Endothelial cell of umbilical vein (primary cell): ENCODE measurements at regions of chr1 and their contacts with region 1.

Region 1: DNA sequence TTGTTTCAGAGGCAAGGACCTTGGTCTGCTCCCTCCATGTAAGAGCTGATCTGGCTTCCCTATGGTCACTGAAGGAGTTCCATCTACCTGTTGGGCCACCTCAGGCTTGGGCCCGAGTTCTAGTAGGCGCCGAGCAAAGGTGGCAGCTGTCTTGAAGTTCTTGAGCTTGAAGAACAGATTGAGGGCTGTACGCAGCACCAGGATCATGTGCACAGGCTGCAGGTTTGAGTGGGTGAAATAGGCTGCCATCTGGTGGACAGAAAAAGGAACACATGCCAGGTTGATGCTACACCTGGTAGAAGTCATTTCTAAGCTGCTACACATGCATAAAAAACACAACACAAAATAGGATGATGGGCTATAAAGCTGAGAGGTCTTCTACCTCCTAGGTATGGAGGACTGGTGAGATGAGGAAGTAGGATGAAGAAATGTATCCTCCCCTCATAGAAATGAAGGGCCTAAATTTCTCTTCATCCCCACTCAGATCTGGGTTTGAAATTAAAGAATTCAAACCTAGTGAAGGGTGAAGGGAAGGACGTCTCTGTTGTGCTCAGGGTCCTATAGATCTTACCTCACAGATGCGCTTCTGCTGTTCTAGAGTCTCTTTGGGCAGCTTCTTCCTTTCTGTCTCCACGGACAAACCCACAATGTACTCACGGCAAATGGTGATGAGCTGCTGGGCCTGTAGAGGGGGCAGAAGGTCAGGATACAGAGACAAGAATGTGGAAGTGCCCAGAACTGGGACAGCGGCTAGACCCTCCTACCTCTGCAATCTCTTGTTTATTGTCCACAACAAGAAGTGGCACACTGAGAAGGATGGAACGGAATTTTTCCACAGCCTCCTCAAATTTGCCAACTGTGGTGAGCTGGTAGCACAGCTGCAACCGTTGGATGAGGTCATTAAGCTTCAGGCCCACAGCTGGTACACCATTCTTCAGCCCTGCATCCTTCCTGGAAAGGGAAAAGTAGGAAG is 6.6 kb upstream of the PEX19 start:
- DNase-seq: peak; percentile 76
- H3K4me3 ChIP-seq: no peak overlapping the region
- H3K27ac ChIP-seq: no peak overlapping the region
- H3K4me1 ChIP-seq: no peaks in the 10 kb centered on the region
- H3K27me3 ChIP-seq: no peaks in the 10 kb centered on the region
- CTCF ChIP-seq: peak; percentile 66 to 72
- POLR2A ChIP-seq: no peak

Region 2: GRCh38 chr1:160161965-160162705 is 129.4 kb before region 1 on chr1:
- CTCF ChIA-PET with region 1: interaction called, 15 read pairs
- POLR2A ChIA-PET with region 1: no interaction called
- dilution Hi-C with region 1: no loop called
- intact Hi-C with region 1: no loop called
- DNase-seq: peak; percentile 34
- H3K4me3 ChIP-seq: no peak overlapping the region
- H3K27ac ChIP-seq: no peak overlapping the region
- H3K4me1 ChIP-seq: no peaks in the 10 kb centered on the region
- H3K27me3 ChIP-seq: peaks cover 8 to 11% of the 10 kb centered on the region in 2 experiments
- CTCF ChIP-seq: peak; percentile 20 to 68
- POLR2A ChIP-seq: no peak

Region 3: DNA sequence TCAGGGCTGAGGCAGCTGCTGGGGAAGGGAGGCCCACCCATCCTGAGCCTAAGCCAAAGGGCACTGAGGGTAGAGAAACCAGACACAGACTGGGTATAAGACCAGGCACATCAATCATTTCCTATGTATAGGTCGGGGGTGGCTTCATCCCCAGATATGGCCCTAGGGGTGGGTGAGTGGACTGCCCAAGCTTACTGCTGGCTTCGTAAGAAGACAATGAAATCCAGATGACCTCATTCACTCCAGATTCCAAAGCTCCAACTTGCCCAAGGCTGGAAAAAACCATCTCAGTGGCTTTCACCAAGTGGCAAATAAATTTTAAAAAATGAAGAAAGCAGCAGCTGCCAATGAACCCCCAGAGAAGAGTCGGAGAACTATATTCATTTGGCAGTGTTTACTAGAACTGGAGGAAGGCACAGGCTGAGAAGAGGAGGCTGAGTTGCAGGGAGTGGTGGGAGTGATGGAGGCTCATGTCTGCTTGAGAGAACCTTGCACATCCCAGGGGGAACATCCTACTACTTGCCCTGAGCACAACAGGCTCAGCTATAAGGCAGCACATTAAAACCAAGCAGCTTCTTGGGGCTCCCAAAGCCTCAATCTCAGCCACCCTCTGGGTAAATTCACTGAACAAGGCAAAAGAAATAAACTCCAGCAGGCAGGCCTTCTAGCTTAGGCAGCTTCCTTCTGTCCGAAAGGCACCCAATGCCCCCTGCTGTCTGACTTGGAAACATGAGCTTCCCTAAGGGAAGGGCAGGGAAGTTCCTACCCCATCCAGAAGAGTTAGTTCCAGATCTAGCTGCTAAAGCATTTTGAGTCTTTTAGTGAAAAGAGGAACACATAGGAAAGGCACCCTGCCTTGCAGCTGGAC is 72.2 kb before region 1 on chr1:
- CTCF ChIA-PET with region 1: interaction called, 44 read pairs
- POLR2A ChIA-PET with region 1: no interaction called
- dilution Hi-C with region 1: no loop called
- intact Hi-C with region 1: no loop called
- DNase-seq: peak; percentile 73
- H3K4me3 ChIP-seq: no peak overlapping the region
- H3K27ac ChIP-seq: peak overlapping the region; percentile 16
- H3K4me1 ChIP-seq: peaks cover 12% of the 10 kb centered on the region
- H3K27me3 ChIP-seq: no peaks in the 10 kb centered on the region
- CTCF ChIP-seq: peak; percentile 52 to 70
- POLR2A ChIP-seq: no peak

Region 4: GRCh38 chr1:160261893-160262794 is 29.4 kb before region 1 on chr1 and contains the start of gene DCAF8:
- CTCF ChIA-PET with region 1: interaction called, 11 read pairs
- POLR2A ChIA-PET with region 1: no interaction called
- dilution Hi-C with region 1: no loop called
- intact Hi-C with region 1: loop called (anchors 1 kb)
- DNase-seq: peak; percentile 99
- H3K4me3 ChIP-seq: peak within 1 kb of the TSS; percentile 27 to 87 (median 64)
- H3K27ac ChIP-seq: peak within 1 kb of the TSS; percentile 74
- H3K4me1 ChIP-seq: peaks cover 15% of the 10 kb centered on the region
- H3K27me3 ChIP-seq: no peaks in the 10 kb centered on the region
- CTCF ChIP-seq: no peak
- POLR2A ChIP-seq: peak; percentile 91
- total RNA-seq, gene DCAF8: 99.9 and 106 TPM in 2 replicates

Region 5: GRCh38 chr1:160307118-160307854 is 15.8 kb after region 1 on chr1:
- CTCF ChIA-PET with region 1: interaction called, 35 read pairs
- POLR2A ChIA-PET with region 1: no interaction called
- dilution Hi-C with region 1: no loop called
- intact Hi-C with region 1: no loop called
- DNase-seq: no peak
- H3K4me3 ChIP-seq: no peak overlapping the region
- H3K27ac ChIP-seq: no peak overlapping the region
- H3K4me1 ChIP-seq: no peaks in the 10 kb centered on the region
- H3K27me3 ChIP-seq: no peaks in the 10 kb centered on the region
- CTCF ChIP-seq: no peak
- POLR2A ChIP-seq: no peak

Region 6: DNA sequence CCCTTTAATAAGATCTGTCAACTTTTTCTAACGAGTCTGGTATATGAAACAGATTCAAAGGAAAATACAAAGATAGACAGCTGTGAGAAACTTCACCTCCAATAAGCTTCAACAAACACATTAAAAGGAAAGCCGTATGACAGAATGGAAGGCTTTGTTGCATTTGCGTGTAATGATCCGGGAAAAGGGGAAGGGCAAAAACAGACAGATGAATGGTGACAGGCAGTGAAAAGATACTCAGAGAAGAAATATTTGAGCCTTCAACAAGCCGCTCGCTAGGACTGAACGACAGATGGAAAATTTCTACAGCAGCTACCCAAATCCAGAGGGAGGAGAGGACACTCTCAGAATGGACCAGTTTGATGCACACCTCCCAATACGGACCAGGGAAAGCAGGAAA is 36.6 kb after region 1 on chr1:
- CTCF ChIA-PET with region 1: interaction called, 24 read pairs
- POLR2A ChIA-PET with region 1: no interaction called
- dilution Hi-C with region 1: no loop called
- intact Hi-C with region 1: loop called (anchors 5 kb)
- DNase-seq: no peak
- H3K4me3 ChIP-seq: no peak overlapping the region
- H3K27ac ChIP-seq: no peak overlapping the region
- H3K4me1 ChIP-seq: no peaks in the 10 kb centered on the region
- H3K27me3 ChIP-seq: no peaks in the 10 kb centered on the region
- CTCF ChIP-seq: no peak
- POLR2A ChIP-seq: no peak

Region 7: DNA sequence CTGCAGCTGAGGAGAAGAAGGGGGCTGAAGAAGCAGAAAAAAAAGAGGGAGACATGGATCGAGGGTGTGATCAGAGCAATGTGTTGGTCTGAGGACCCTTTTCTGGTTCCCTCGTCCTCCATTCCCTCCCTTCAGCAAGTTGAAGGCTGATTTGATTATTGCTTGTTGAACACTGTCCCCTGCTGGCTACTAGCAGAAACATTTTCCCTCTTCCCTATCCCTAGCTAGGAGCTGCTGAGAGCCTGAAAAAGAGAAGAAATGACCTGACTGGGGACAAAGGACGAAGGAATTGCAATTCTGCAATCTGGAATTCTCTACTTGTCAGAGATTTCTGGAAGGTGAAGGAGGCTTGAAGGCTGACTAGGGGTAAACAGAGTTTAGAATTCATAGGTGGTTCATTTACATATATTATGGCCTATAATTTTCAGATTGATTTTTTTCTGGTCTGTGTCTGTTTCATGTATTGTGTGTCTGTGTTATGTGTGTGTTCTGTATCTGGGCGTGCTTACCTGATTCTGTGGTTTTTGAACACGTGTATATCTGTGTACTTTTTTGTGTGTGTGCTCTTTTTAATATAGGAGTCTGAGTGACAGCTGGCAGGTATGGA is 85.1 kb after region 1 on chr1:
- CTCF ChIA-PET with region 1: interaction called, 11 read pairs
- POLR2A ChIA-PET with region 1: no interaction called
- dilution Hi-C with region 1: no loop called
- intact Hi-C with region 1: no loop called
- DNase-seq: peak; percentile 65
- H3K4me3 ChIP-seq: no peak overlapping the region
- H3K27ac ChIP-seq: no peak overlapping the region
- H3K4me1 ChIP-seq: no peaks in the 10 kb centered on the region
- H3K27me3 ChIP-seq: peaks cover 20 to 26% of the 10 kb centered on the region in 2 experiments
- CTCF ChIP-seq: peak; percentile 83 to 92
- POLR2A ChIP-seq: no peak

Region 8: GRCh38 chr1:160410406-160411005 is 119.0 kb after region 1 on chr1:
- CTCF ChIA-PET with region 1: no interaction called
- POLR2A ChIA-PET with region 1: no interaction called
- dilution Hi-C with region 1: no loop called
- intact Hi-C with region 1: no loop called
- DNase-seq: no peak
- H3K4me3 ChIP-seq: no peak overlapping the region
- H3K27ac ChIP-seq: no peak overlapping the region
- H3K4me1 ChIP-seq: no peaks in the 10 kb centered on the region
- H3K27me3 ChIP-seq: peaks cover 60 to 65% of the 10 kb centered on the region in 2 experiments
- CTCF ChIP-seq: no peak
- POLR2A ChIP-seq: no peak

Region 9: GRCh38 chr1:160590488-160590887 is 299.0 kb after region 1 on chr1:
- CTCF ChIA-PET with region 1: no interaction called
- POLR2A ChIA-PET with region 1: no interaction called
- dilution Hi-C with region 1: no loop called
- intact Hi-C with region 1: no loop called
- DNase-seq: no peak
- H3K4me3 ChIP-seq: no peak overlapping the region
- H3K27ac ChIP-seq: no peak overlapping the region
- H3K4me1 ChIP-seq: no peaks in the 10 kb centered on the region
- H3K27me3 ChIP-seq: no peaks in the 10 kb centered on the region
- CTCF ChIP-seq: no peak
- POLR2A ChIP-seq: no peak